ENCODE measurements at regions of chr1 and their contacts with region 1.

Region 1: DNA sequence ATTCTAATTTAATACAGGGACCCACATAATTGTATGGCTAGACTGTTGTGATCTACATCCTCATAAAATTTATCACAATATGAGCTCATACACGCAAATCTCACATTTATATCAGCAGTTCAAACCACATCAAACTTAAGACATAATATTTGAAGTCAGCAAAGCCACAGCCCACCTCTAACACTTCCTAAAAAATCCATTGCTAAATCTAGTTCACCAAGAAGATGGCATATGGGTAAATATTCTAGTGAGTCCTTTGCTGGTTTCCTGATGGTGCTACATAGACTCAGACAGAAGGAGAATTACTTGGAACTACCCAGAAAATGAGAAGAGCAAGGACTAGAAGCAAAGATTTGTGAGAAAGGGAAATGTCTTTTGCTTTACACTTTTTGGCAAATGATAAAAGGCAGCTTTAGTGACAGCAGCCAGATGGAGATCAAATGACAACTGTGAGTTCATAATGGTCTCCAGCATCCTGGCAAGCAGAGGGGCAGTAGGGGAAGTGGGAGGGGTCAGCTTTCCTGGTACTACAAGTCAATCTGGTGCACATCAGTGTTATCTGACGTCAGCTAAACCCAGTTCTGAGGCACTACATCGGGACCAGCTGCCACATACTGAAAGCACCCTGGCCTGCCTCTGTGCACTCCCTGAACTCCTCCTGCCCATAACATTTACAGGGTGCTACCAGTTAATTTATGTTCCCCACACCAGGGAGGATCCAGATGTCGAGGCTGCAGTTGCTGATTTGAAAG is 10.6 kb upstream of the GADD45A start:
- DNase-seq: peak; percentile 63
- ATAC-seq: peak; percentile 95
- H3K4me3 Mint-ChIP-seq: peak overlapping the region; percentile 45
- H3K27ac Mint-ChIP-seq: peak overlapping the region; percentile 78
- H3K4me1 Mint-ChIP-seq: peaks cover 21% of the 10 kb centered on the region
- H3K27me3 Mint-ChIP-seq: peaks cover 2% of the 10 kb centered on the region

Region 2: DNA sequence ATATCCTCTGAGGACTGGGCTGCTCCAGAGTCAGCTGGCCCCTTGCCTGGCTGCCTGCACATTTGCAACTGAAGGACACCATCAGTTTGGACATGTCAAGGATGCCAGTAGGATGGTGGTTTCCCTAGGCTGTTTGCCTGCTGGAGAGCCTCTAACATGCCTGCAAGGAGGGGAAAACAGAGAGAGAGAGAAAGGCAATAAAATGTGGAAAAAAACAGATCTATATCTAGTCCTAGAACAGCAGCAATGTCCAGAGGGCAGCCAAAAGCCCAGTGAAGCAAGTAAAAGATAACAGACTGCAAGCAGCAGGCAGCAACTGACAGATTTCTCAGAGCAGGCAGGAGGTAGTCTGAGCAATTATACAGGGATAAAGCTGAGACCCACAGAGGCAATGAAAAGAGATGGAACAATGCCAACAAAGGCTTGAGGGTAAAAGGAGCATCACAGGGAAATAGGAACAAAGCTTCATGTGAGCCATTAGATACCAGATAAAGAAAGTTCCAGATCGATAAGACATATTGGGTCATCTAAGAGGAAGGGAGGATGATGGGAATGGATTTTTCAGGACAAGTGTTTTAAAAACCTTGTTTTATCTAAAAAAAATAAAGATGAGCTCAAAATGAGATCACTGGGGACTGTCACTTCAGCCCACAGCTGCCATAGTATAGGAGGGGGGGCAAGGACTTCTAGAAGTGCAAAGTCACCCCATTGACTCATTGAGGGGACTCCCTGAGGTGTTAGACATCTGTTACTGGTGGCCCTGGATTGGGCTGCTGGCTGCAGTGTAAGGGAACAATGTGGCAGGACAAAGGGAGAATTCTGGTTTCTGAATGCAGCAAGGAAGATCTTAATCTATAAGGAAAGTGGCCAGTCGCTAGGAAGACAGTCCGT is 28.0 kb before region 1 on chr1:
- CTCF ChIA-PET with region 1: no interaction called
- POLR2A ChIA-PET with region 1: no interaction called
- intact Hi-C with region 1: no loop called
- DNase-seq: no peak
- ATAC-seq: peak; percentile 57
- H3K4me3 Mint-ChIP-seq: no peak overlapping the region
- H3K27ac Mint-ChIP-seq: no peak overlapping the region
- H3K4me1 Mint-ChIP-seq: no peaks in the 10 kb centered on the region
- H3K27me3 Mint-ChIP-seq: no peaks in the 10 kb centered on the region

Region 3: GRCh38 chr1:67700692-67701410 is 26.4 kb after region 1 on chr1:
- CTCF ChIA-PET with region 1: interaction called, 11 read pairs
- POLR2A ChIA-PET with region 1: no interaction called
- intact Hi-C with region 1: no loop called
- DNase-seq: peak; percentile 44
- ATAC-seq: peak; percentile 93
- H3K4me3 Mint-ChIP-seq: no peak overlapping the region
- H3K27ac Mint-ChIP-seq: peak overlapping the region; percentile 22
- H3K4me1 Mint-ChIP-seq: peaks cover 12% of the 10 kb centered on the region
- H3K27me3 Mint-ChIP-seq: no peaks in the 10 kb centered on the region